Ascending aorta (tissue), 2 donors: ENCODE measurements at regions of chr11 and their contacts with region 1.

Region 1: DNA sequence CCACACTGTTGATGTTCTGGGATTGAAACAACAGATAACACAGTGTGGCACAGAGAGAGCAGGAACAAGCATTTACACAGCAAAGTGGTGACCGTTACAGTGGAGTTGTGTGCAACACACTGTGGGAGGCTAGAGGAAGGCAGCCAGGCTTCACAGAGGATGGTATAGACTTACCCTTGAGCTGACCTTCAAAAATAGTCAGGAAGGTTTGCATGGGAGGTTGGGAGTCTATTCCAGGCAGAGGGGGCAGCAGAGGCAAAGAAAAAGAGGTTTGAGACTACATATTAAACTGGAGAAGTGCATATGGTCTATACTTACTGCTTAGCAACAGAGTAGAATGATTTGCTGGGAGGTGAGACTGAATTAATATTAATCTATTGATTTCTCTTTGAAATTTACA is 22.1 kb upstream of the FOLH1 start:
- DNase-seq: no peak
- H3K4me3 ChIP-seq: no peak overlapping the region
- H3K27ac ChIP-seq: no peak overlapping the region
- H3K4me1 ChIP-seq: no peaks in the 10 kb centered on the region
- H3K27me3 ChIP-seq: no peaks in the 10 kb centered on the region
- CTCF ChIP-seq: no peak

Region 2: GRCh38 chr11:47980245-47981049 is 1250.1 kb before region 1 on chr11 and contains the start of gene PTPRJ:
- intact Hi-C with region 1: no loop called
- DNase-seq: peak in 1 of 2 donors; percentile 79
- H3K4me3 ChIP-seq: peak within 1 kb of the TSS; percentile 87
- H3K27ac ChIP-seq: peak within 1 kb of the TSS; percentile 90 to 92
- H3K4me1 ChIP-seq: peaks cover 0 to 14% of the 10 kb centered on the region in 2 donors
- H3K27me3 ChIP-seq: no peaks in the 10 kb centered on the region
- CTCF ChIP-seq: no peak
- total RNA-seq, gene PTPRJ: 5.9 TPM

Region 3: DNA sequence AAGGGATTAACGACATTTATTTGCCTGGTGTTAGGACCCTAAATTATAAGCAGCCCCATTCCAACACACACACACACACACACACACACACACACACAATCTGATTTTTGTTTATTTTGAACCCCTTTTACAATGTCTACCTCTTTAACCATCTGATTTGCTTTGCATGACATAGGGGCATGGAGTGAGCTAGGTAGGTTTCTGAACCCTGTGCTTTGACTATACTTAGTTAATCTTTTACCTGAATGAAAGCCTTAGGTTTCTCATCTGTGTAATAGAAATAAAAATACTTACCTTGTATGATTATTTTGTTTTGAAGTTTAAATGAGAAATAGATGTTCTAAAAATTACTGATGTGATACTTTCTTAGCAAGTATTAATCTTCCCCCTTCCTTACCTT is 72.6 kb after region 1 on chr11:
- intact Hi-C with region 1: no loop called
- DNase-seq: no peak
- H3K4me3 ChIP-seq: no peak overlapping the region
- H3K27ac ChIP-seq: no peak overlapping the region
- H3K4me1 ChIP-seq: no peaks in the 10 kb centered on the region
- H3K27me3 ChIP-seq: no peaks in the 10 kb centered on the region
- CTCF ChIP-seq: no peak

Region 4: DNA sequence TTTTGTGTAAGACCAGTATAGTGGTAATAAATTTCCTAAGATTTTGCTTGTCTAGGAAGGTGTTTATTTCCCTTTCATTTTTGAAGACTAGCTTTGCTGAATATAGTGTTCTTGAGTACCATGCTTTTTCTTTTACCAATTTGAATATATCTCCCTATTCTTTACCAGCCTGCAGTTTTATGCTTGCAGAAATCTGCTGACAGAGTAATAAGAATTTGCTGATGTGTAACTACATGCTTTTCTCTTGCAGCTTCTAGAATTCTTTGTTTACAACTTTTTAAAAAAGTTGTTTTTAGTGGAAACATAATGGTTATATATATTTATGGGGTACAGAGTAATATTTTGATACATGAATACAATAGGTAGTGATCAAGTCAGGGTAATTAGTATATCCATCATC is 302.7 kb after region 1 on chr11:
- intact Hi-C with region 1: loop called (anchors 5 kb)
- DNase-seq: no peak
- H3K4me3 ChIP-seq: no peak overlapping the region
- H3K27ac ChIP-seq: no peak overlapping the region
- H3K4me1 ChIP-seq: no peaks in the 10 kb centered on the region
- H3K27me3 ChIP-seq: no peaks in the 10 kb centered on the region
- CTCF ChIP-seq: no peak